Heart right ventricle (tissue), 16 donors: ENCODE measurements at regions of chr17 and their contacts with region 1.

Region 1: GRCh38 chr17:12756786-12757185 is 32.5 kb upstream of the ARHGAP44 start:
- DNase-seq: no peak
- ATAC-seq: no peak
- H3K4me3 ChIP-seq: no peak overlapping the region
- H3K27ac ChIP-seq: peak overlapping the region in 1 of 10 donors; percentile 6
- H3K4me1 ChIP-seq: no peaks in the 10 kb centered on the region
- H3K27me3 ChIP-seq: no peaks in the 10 kb centered on the region
- CTCF ChIP-seq: no peak

Region 2: GRCh38 chr17:12242345-12242954 is 514.3 kb before region 1 on chr17:
- intact Hi-C with region 1: no loop called
- DNase-seq: no peak
- ATAC-seq: no peak
- H3K4me3 ChIP-seq: no peak overlapping the region
- H3K27ac ChIP-seq: no peak overlapping the region
- H3K4me1 ChIP-seq: no peaks in the 10 kb centered on the region
- H3K27me3 ChIP-seq: peaks cover 0 to 8% (median 0%) of the 10 kb centered on the region in 7 donors
- CTCF ChIP-seq: no peak

Region 3: GRCh38 chr17:12990041-12990808 is 233.4 kb after region 1 on chr17:
- intact Hi-C with region 1: loop called in 2 of 10 experiments (anchors 10 kb)
- DNase-seq: peak; percentile 72 to 79
- ATAC-seq: peak; percentile 47 to 87 (median 80)
- H3K4me3 ChIP-seq: no peak overlapping the region
- H3K27ac ChIP-seq: peak overlapping the region in 7 of 10 donors; percentile 14 to 69 (median 49)
- H3K4me1 ChIP-seq: peaks cover 5 to 43% (median 23%) of the 10 kb centered on the region in 9 donors
- H3K27me3 ChIP-seq: no peaks in the 10 kb centered on the region
- CTCF ChIP-seq: no peak